A549 (cell line): ENCODE measurements at regions of chr12 and their contacts with region 1.

Region 1: DNA sequence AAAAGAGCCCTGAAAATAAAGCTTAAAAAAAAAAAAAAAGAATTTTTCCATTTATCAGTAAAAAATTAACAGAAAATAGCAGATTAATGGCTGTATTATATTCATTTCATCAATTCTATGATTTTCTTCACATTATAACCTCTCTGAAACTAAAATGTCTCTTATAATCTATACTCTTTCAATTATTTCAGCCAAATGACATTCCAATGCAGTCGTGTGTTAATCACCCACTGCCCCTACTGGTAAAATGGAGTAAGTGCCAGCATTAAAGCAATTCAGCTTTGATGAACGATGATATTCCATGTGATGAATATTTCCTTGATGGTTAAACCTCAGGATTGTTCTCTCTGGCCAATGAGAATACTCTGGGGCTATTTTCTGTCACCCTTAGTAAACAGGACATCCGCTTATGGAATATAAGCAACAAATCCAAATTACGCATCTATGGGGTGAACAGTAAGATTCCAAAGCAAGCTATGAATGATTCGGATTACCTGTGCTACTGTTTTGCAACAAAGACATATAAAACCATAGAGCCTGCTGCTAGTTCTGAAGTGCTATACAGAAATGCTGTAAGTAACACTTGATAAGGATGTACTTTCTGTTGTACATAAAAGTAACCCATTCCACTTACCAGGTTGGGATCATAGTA is 20.3 kb upstream of the SYCP3 start:
- DNase-seq: peak; percentile 43
- ATAC-seq: peak; percentile 80 to 89; a peak in 5 of 6 replicates
- H3K4me3 ChIP-seq: no peak overlapping the region
- H3K27ac ChIP-seq: no peak overlapping the region
- H3K4me1 ChIP-seq: 0 out of 3 replicates have a peak, but pooled peaks cover 3% of the 10 kb centered on the region
- CTCF ChIP-seq: peak; percentile 64
- EP300 ChIP-seq: no peak
- POLR2A ChIP-seq: no peak
- RAD21 ChIP-seq: peak; percentile 57 to 76

Region 2: DNA sequence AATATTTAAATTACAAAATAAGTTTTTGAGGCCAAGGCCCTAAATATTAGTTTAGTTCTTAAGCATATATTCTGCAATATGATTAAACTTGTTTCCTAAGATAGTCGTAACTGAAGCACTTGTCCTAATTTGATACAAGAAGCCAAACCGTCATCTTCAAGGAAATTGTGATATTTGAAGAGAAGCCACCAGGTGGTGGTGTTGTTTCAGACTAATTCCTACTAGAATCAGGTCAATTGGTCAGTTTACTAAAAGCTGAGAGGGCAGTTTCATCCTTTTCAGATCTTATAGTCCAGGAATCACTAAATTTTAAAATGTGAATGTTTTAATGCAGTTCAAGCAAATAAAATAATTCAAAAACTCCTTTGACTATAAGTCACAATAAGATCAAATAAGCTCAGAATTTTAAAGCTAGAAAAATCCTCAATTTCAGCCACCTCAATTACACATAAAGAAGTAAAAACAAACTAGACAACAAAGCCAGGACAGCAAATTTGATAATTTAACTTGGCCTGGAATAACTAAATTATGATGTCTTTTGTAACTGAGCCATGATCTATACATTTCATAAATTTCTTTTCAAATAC is 344.9 kb before region 1 on chr12:
- CTCF ChIA-PET with region 1: interaction called, 11 read pairs
- POLR2A ChIA-PET with region 1: no interaction called
- DNase-seq: peak; percentile 60 to 83
- ATAC-seq: peak; percentile 86 to 87
- H3K4me3 ChIP-seq: no peak overlapping the region
- H3K27ac ChIP-seq: no peak overlapping the region
- H3K4me1 ChIP-seq: no peaks in the 10 kb centered on the region
- CTCF ChIP-seq: peak; percentile 88
- EP300 ChIP-seq: no peak
- POLR2A ChIP-seq: no peak
- RAD21 ChIP-seq: peak; percentile 90 to 95